Ovary (tissue), 10 donors: ENCODE measurements at regions of chr11 and their contacts with region 1.

Region 1: DNA sequence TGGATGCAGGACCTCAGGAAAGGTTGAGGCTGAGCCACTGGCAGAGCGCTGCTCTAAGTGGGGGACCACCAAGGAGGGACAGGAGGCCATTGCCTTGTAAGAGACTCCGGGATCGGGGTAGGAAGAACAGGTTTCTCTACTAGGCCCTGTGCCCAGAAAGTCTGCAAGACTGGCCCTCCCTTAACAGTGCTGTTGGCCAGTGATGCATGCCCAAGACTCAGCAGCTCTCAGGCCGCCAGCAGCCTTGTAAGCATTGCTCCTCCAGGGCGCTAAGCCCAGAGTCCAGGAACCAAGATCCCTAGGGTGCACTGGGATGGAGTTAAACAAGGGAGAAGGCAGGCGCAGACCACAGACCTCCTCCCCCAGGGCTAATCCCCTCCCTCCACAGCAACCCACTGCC is 39.3 kb upstream of the PANX1 start:
- DNase-seq: no peak
- H3K4me3 ChIP-seq: no peak overlapping the region
- H3K27ac ChIP-seq: no peak overlapping the region
- H3K4me1 ChIP-seq: no peaks in the 10 kb centered on the region
- H3K27me3 ChIP-seq: no peaks in the 10 kb centered on the region
- CTCF ChIP-seq: no peak
- EP300 ChIP-seq: no peak
- POLR2A ChIP-seq: no peak

Region 2: GRCh38 chr11:93652161-93652597 is 437.2 kb before region 1 on chr11:
- intact Hi-C with region 1: no loop called
- DNase-seq: no peak
- H3K4me3 ChIP-seq: no peak overlapping the region
- H3K27ac ChIP-seq: no peak overlapping the region
- H3K4me1 ChIP-seq: no peaks in the 10 kb centered on the region
- H3K27me3 ChIP-seq: no peaks in the 10 kb centered on the region
- CTCF ChIP-seq: peak in 2 of 3 donors; percentile 32 to 57
- EP300 ChIP-seq: no peak
- POLR2A ChIP-seq: no peak

Region 3: DNA sequence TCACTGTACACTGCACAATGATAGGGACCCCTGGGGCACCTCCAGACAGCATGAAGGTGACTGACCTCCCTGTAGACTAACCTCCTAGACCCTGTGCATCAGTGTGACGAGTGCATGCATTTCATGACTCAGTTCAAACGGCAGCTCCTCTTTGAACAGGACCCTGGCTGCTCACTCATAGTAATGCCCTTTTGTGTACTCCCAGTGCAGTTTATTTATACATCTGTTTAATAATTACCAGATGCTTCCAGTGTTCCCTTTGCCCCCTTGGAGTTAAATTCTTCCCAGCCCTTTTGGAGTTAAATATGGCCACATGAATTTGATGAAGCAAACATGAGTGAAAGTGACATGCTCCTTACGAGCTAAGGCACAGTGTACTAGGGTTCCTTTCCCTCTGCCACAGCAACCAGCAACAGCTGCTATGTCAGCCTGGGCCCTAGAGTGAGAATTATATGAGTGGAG is 111.7 kb after region 1 on chr11:
- intact Hi-C with region 1: loop called in 1 of 4 experiments (anchors 10 kb)
- DNase-seq: no peak
- H3K4me3 ChIP-seq: no peak overlapping the region
- H3K27ac ChIP-seq: no peak overlapping the region
- H3K4me1 ChIP-seq: no peaks in the 10 kb centered on the region
- H3K27me3 ChIP-seq: no peaks in the 10 kb centered on the region
- CTCF ChIP-seq: no peak
- EP300 ChIP-seq: no peak
- POLR2A ChIP-seq: no peak